H1 (cell line): ENCODE measurements at regions of chr3 and their contacts with region 1.

Region 1: GRCh38 chr3:186534113-186534669 is 10.0 kb downstream of the CRYGS start:
- DNase-seq: no peak
- H3K4me3 ChIP-seq: no peak overlapping the region
- H3K27ac ChIP-seq: no peak overlapping the region
- H3K4me1 ChIP-seq: 0 out of 7 replicates have a peak, but pooled peaks cover 0 to 3% (median 0%) of the 10 kb centered on the region in 4 experiments
- H3K27me3 ChIP-seq: peaks cover 0 to 1% (median 0%) of the 10 kb centered on the region in 4 experiments; a peak in 1 of 7 replicates
- CTCF ChIP-seq: no peak
- EP300 ChIP-seq: no peak
- POLR2A ChIP-seq: no peak
- RAD21 ChIP-seq: no peak

Region 2: GRCh38 chr3:186520957-186521842 is 13.0 kb before region 1 on chr3:
- CTCF ChIA-PET with region 1: interaction called, 55 read pairs
- POLR2A ChIA-PET with region 1: interaction called, 4 read pairs
- DNase-seq: peak in 1 of 2 experiments; percentile 42
- H3K4me3 ChIP-seq: no peak overlapping the region
- H3K27ac ChIP-seq: no peak overlapping the region
- H3K4me1 ChIP-seq: no peaks in the 10 kb centered on the region
- H3K27me3 ChIP-seq: no peaks in the 10 kb centered on the region; a peak in 1 of 7 replicates
- CTCF ChIP-seq: no peak
- EP300 ChIP-seq: no peak
- POLR2A ChIP-seq: no peak
- RAD21 ChIP-seq: no peak